MCF 10A (cell line): ENCODE measurements at regions of chr19 and their contacts with region 1.

Region 1: GRCh38 chr19:7868676-7869452 is 5.3 kb downstream of the PRR36 start:
- DNase-seq: peak; percentile 91
- H3K4me3 Mint-ChIP-seq: peak overlapping the region; percentile 77
- H3K27ac Mint-ChIP-seq: peak overlapping the region; percentile 42
- H3K4me1 Mint-ChIP-seq: peaks cover 27% of the 10 kb centered on the region
- H3K27me3 Mint-ChIP-seq: no peaks in the 10 kb centered on the region
- CTCF ChIP-seq: peak; percentile 68

Region 2: GRCh38 chr19:7772752-7773291 is 96.0 kb before region 1 on chr19:
- CTCF ChIA-PET with region 1: no interaction called
- POLR2A ChIA-PET with region 1: no interaction called
- intact Hi-C with region 1: no loop called
- DNase-seq: peak; percentile 63
- H3K4me3 Mint-ChIP-seq: peak overlapping the region; percentile 55
- H3K27ac Mint-ChIP-seq: no peak overlapping the region
- H3K4me1 Mint-ChIP-seq: peaks cover 9% of the 10 kb centered on the region
- H3K27me3 Mint-ChIP-seq: peaks cover 44% of the 10 kb centered on the region
- CTCF ChIP-seq: no peak

Region 3: DNA sequence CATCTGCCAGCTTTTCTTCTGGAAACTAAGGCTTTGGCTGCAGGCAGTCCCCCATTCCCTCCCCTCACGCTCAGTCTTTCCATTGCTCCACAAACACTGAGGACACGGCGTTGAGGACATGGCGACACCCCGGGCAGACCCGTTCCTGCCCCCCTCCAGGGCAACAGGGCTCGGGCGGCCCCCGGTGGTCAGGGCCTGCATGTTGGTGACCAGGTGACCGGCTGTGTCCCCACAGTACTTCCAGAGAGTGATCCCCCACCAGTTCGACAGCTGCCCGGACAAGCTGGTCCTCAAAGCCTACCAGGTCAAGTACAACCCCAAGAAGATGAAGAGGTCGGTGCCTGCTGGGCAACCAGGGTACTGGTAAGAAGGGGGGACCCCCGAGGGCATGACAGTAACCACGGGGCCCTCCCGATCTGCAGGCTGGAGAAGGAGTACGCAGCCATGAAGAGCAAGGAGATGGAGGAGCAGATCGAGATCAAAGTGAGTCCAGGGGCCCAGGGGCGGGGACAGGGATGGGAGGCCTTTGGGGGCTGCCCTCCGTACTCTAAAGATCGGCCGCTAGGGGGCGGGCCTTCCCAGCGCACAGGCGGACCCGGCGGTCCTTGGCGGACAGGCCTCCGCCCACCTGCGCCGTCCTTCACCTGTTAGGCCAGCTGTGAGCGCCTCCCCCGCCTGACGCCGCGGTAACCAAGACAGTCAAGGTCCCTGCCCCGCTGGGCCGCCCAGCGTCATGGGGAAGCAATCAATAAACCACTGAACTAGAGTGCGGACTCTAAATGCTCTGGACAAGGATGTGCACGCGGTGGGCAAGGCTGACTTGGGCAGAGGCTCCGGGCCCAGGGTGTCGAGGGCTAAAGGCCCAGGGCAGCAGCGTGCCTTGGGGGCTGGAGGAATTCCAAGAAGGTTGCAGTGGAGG is 15.8 kb before region 1 on chr19:
- CTCF ChIA-PET with region 1: interaction called, 14 read pairs
- POLR2A ChIA-PET with region 1: interaction called, 10 read pairs
- intact Hi-C with region 1: no loop called
- DNase-seq: peak; percentile 82
- H3K4me3 Mint-ChIP-seq: no peak overlapping the region
- H3K27ac Mint-ChIP-seq: no peak overlapping the region
- H3K4me1 Mint-ChIP-seq: peaks cover 8% of the 10 kb centered on the region
- H3K27me3 Mint-ChIP-seq: no peaks in the 10 kb centered on the region
- CTCF ChIP-seq: peak; percentile 96

Region 4: DNA sequence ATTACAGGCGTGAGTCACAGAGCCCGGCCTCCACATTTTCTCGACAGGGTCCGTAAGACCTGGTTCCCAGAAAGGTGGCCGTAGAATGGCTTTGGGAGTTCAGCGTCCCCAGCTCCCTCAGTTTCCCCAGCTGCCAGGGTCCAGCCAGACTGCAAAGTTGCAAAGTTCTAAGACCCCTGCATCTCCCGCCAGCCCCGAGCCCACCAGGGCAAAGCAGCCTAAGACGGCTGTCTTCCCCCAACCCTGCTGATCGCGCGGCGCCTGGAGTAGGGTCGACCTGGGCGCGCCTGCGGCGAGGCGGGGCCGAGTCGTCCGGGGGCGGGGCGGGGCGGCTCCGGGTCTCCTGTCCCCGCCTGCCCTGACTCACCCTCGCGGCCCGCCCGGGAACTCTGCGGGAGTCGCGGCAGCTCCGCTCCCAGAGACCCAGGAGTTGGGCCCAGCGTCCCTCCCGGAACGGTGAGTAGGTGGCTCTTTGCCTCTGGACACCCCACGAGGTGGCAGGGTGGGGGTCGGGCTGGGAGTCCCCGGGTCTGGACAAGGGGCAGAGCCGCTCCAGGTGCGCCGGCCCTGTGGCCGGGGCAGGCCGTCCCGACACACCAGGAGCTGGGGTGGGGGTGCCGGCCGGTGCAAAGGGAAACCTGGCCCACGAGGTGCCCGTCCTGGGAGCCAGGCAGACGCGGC is 19.4 kb after region 1 on chr19 and contains the start of gene LRRC8E:
- CTCF ChIA-PET with region 1: interaction called, 9 read pairs
- POLR2A ChIA-PET with region 1: interaction called, 24 read pairs
- intact Hi-C with region 1: no loop called
- DNase-seq: peak; percentile 83
- H3K4me3 Mint-ChIP-seq: peak within 1 kb of the TSS; percentile 72
- H3K27ac Mint-ChIP-seq: no peak within 1 kb of the TSS
- H3K4me1 Mint-ChIP-seq: peaks cover 6% of the 10 kb centered on the region
- H3K27me3 Mint-ChIP-seq: no peaks in the 10 kb centered on the region
- CTCF ChIP-seq: no peak
- total RNA-seq, gene LRRC8E: 10.3 and 11.8 TPM in 2 replicates

Region 5: GRCh38 chr19:7919610-7920518 is 51.0 kb after region 1 on chr19 and contains the start of gene SNAPC2:
- CTCF ChIA-PET with region 1: interaction called, 15 read pairs
- POLR2A ChIA-PET with region 1: interaction called, 22 read pairs
- intact Hi-C with region 1: loop called (anchors 5 kb)
- DNase-seq: peak; percentile 94
- H3K4me3 Mint-ChIP-seq: peak within 1 kb of the TSS; percentile 88
- H3K27ac Mint-ChIP-seq: peak within 1 kb of the TSS; percentile 59
- H3K4me1 Mint-ChIP-seq: peaks cover 19% of the 10 kb centered on the region
- H3K27me3 Mint-ChIP-seq: no peaks in the 10 kb centered on the region
- CTCF ChIP-seq: no peak
- total RNA-seq, gene SNAPC2: 24.1 and 27.1 TPM in 2 replicates